Naive thymus-derived CD4-positive, alpha-beta T cell (primary cell): ENCODE measurements at regions of chr12 and their contacts with region 1.

Region 1: DNA sequence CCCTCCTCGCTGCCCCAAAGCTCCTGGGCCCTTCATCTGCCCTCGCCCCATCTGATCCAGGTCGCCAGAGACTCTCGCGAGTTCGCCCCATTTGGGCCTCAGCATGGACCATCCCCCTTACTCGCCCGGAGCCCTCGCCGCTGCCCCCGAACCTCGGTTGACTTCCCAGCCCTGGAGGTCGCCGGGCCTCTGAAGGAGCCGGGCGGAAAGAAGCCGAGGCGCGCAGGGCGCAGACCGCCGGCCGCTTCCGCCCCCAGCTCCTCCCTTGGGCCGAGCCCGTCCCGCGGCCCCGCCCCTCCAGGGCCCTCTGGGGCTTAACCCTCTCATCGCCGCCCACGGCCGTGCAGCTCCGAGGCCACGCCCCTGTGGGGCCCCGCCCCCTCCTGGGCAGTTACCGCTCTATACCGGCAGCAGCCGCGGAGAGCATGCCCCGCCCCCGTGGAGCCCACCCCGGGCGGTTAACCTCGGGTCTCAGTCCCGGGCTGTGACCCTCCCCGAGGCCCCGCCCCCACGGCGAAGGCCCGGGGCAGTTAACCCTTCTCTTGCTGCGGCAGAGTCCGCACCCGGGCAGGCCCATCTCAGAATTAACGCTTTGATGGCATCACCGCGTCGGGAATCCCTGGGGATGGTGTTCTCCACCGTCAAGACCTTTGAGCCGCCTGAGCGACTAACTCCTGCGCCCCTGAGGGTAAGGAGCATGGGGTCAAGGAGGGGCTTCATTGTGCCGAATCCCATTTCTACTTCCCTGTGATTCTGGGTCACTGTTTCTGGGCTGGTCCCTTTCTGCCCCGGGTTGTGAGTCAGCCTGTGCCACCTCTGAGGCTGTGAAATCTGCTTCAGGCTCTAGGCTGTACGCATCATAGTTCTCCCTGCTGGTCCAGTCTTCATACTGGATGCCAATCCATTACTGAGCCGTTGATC is at the start of gene SPSB2:
- DNase-seq: peak; percentile 96 to 100 (median 98)
- ATAC-seq: peak; percentile 97
- H3K4me3 ChIP-seq: peak within 1 kb of the TSS; percentile 98
- H3K4me3 Mint-ChIP-seq: peak within 1 kb of the TSS; percentile 87 to 95 (median 91)
- H3K27ac ChIP-seq: peak within 1 kb of the TSS; percentile 77
- H3K27ac Mint-ChIP-seq: peak within 1 kb of the TSS; percentile 79 to 94 (median 88)
- H3K4me1 ChIP-seq: peaks cover 32 to 34% of the 10 kb centered on the region in 2 donors
- H3K4me1 Mint-ChIP-seq: peaks cover 34 to 58% (median 47%) of the 10 kb centered on the region in 7 donors
- H3K27me3 ChIP-seq: no peaks in the 10 kb centered on the region
- H3K27me3 Mint-ChIP-seq: no peaks in the 10 kb centered on the region
- total RNA-seq, gene SPSB2: 5.1 to 20.2 (median 11.2) TPM

Region 2: GRCh38 chr12:6493497-6494257 is 379.7 kb before region 1 on chr12 and contains the start of gene NCAPD2:
- CTCF ChIA-PET with region 1: no interaction called
- POLR2A ChIA-PET with region 1: no interaction called
- intact Hi-C with region 1: loop called in 1 of 2 experiments (anchors 5 kb)
- DNase-seq: peak; percentile 82 to 97 (median 96)
- ATAC-seq: peak; percentile 91
- H3K4me3 ChIP-seq: peak within 1 kb of the TSS; percentile 98
- H3K4me3 Mint-ChIP-seq: peak within 1 kb of the TSS; percentile 86 to 98 (median 96)
- H3K27ac ChIP-seq: peak within 1 kb of the TSS; percentile 83
- H3K27ac Mint-ChIP-seq: peak within 1 kb of the TSS; percentile 87 to 97 (median 96)
- H3K4me1 ChIP-seq: peaks cover 22 to 24% of the 10 kb centered on the region in 2 donors
- H3K4me1 Mint-ChIP-seq: peaks cover 18 to 44% (median 37%) of the 10 kb centered on the region in 7 donors
- H3K27me3 ChIP-seq: no peaks in the 10 kb centered on the region
- H3K27me3 Mint-ChIP-seq: no peaks in the 10 kb centered on the region
- total RNA-seq, gene NCAPD2: 30.3 to 121 (median 38.4) TPM

Region 3: GRCh38 chr12:6723607-6724396 is 149.6 kb before region 1 on chr12 and contains the start of gene COPS7A:
- CTCF ChIA-PET with region 1: no interaction called
- POLR2A ChIA-PET with region 1: no interaction called
- intact Hi-C with region 1: loop called in 1 of 2 experiments (anchors 1 kb)
- DNase-seq: peak; percentile 77 to 94 (median 90)
- ATAC-seq: peak; percentile 93
- H3K4me3 ChIP-seq: peak within 1 kb of the TSS; percentile 63
- H3K4me3 Mint-ChIP-seq: peak within 1 kb of the TSS; percentile 80 to 97 (median 92)
- H3K27ac ChIP-seq: peak within 1 kb of the TSS; percentile 75
- H3K27ac Mint-ChIP-seq: peak within 1 kb of the TSS; percentile 90 to 98 (median 96)
- H3K4me1 ChIP-seq: peaks cover 10 to 11% of the 10 kb centered on the region in 2 donors
- H3K4me1 Mint-ChIP-seq: peaks cover 24 to 34% (median 27%) of the 10 kb centered on the region in 7 donors
- H3K27me3 ChIP-seq: no peaks in the 10 kb centered on the region
- H3K27me3 Mint-ChIP-seq: no peaks in the 10 kb centered on the region
- total RNA-seq, gene COPS7A: 21.9 to 38.7 (median 30.1) TPM

Region 4: DNA sequence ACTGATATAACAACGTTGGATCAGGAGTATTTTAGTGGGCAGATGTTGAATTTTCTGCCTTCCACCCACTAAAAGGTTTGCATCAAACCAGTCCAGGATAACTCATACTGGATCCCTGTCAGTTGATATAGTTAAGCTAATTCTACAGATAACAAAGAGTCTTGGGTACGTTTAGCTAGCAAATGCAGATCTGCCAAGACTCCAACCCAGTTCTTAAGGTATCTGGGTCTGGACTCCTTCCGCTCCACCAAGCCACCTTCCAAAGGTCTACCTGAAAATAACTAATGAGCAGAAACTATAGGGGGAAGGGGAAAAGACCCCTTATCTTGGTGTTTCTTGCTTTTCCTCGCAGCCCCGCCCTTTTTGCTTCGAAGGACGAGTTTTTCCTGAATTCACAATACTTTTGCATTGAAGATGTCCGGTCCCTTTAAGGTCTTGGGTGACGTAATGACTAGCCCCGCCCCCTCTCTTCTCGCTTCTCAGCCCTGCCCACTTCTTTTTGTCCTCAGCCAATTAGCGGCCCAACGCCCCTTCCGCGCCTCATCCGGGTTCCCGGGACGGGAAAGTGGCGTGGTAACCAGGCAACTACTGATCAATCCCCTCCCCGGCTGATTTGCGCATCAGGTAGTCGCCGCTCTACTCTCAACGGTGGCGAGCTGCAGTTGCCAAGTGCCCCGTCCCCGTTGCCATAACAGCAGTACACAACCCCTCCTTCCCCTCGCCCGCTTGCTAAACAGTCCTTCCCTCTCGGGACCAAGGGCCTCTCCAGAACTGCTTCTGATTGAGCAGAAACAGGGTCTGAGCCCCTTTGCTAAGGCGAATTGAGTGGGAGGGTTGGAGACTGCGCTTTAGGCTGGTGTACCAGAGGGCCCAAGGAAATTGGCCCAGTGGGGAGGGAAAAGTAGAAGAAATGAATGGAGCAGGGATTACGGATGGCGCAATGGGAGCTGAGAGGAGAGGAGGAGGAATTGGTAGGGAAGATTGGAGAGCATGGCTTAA is 31.2 kb after region 1 on chr12 and contains the start of gene LRRC23:
- CTCF ChIA-PET with region 1: interaction called, 10 read pairs
- POLR2A ChIA-PET with region 1: interaction called, 17 read pairs
- intact Hi-C with region 1: loop called (anchors 1 kb)
- DNase-seq: peak; percentile 89 to 98 (median 95)
- ATAC-seq: peak; percentile 98
- H3K4me3 ChIP-seq: peak within 1 kb of the TSS; percentile 75
- H3K4me3 Mint-ChIP-seq: peak within 1 kb of the TSS in 1 of 10 donors; percentile 8
- H3K27ac ChIP-seq: peak within 1 kb of the TSS; percentile 93
- H3K27ac Mint-ChIP-seq: peak within 1 kb of the TSS in 1 of 9 donors; percentile 78
- H3K4me1 ChIP-seq: peaks cover 14 to 17% of the 10 kb centered on the region in 2 donors
- H3K4me1 Mint-ChIP-seq: peaks cover 0 to 10% (median 3%) of the 10 kb centered on the region in 7 donors
- H3K27me3 ChIP-seq: no peaks in the 10 kb centered on the region
- H3K27me3 Mint-ChIP-seq: no peaks in the 10 kb centered on the region
- total RNA-seq, gene LRRC23: 6.6 to 12.1 (median 7.3) TPM

Region 5: DNA sequence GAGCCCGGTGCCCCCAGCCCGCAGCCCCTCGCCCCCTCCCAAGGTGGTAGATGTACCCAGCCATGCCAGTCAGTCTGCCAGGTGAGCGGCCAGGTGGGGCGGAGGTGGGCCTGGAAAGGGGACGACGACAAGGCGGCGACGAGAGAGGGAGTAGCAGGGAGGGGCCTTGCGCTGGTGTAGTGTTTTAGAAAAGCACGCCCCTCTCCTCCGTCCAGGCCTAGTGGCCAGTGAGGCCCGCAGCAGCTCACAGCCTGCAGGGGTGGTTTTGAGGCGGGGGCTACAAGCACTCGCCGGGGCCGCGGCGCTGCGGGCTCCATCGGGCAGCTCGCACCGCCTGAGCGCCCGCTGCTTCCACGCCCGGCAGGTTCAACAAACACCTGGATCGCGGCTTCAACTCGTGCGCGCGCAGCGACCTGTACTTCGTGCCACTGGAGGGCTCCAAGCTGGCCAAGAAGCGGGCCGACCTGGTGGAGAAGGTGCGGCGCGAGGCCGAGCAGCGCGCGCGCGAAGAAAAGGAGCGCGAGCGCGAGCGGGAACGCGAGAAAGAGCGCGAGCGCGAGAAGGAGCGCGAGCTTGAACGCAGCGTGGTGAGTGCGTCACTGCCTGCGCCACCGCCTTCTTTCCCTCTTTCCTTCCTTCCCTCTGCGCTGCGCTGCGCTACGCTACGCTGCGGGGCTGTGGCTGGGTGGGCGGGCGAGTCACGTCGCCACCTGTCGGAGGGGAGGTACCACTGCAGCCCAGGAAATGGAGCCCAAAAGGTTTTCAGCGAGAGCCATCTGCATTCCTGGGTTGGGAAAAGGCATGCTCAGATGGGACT is 64.3 kb after region 1 on chr12:
- CTCF ChIA-PET with region 1: interaction called, 21 read pairs
- POLR2A ChIA-PET with region 1: interaction called, 52 read pairs
- intact Hi-C with region 1: loop called in 1 of 2 experiments (anchors 1 kb)
- DNase-seq: peak; percentile 81 to 96 (median 93)
- ATAC-seq: peak; percentile 97
- H3K4me3 ChIP-seq: peak overlapping the region; percentile 90
- H3K4me3 Mint-ChIP-seq: peak overlapping the region; percentile 75 to 88 (median 84)
- H3K27ac ChIP-seq: peak overlapping the region; percentile 92
- H3K27ac Mint-ChIP-seq: peak overlapping the region; percentile 91 to 99 (median 96)
- H3K4me1 ChIP-seq: peaks cover 5 to 29% of the 10 kb centered on the region in 2 donors
- H3K4me1 Mint-ChIP-seq: peaks cover 41 to 67% (median 51%) of the 10 kb centered on the region in 7 donors
- H3K27me3 ChIP-seq: no peaks in the 10 kb centered on the region
- H3K27me3 Mint-ChIP-seq: no peaks in the 10 kb centered on the region

Region 6: GRCh38 chr12:6965026-6965661 is 91.8 kb after region 1 on chr12:
- CTCF ChIA-PET with region 1: interaction called, 14 read pairs
- POLR2A ChIA-PET with region 1: interaction called, 11 read pairs
- intact Hi-C with region 1: loop called (anchors 1 kb)
- DNase-seq: peak; percentile 77 to 89 (median 85)
- ATAC-seq: peak; percentile 69
- H3K4me3 ChIP-seq: no peak overlapping the region
- H3K4me3 Mint-ChIP-seq: peak overlapping the region in 3 of 10 donors; percentile 9 to 23 (median 17)
- H3K27ac ChIP-seq: peak overlapping the region; percentile 68
- H3K27ac Mint-ChIP-seq: peak overlapping the region; percentile 75 to 95 (median 87)
- H3K4me1 ChIP-seq: peaks cover 45 to 60% of the 10 kb centered on the region in 2 donors
- H3K4me1 Mint-ChIP-seq: peaks cover 33 to 59% (median 56%) of the 10 kb centered on the region in 7 donors
- H3K27me3 ChIP-seq: no peaks in the 10 kb centered on the region
- H3K27me3 Mint-ChIP-seq: no peaks in the 10 kb centered on the region

Region 7: GRCh38 chr12:7108796-7109571 is 235.6 kb after region 1 on chr12 and contains the start of gene C1RL:
- CTCF ChIA-PET with region 1: interaction called, 45 read pairs
- POLR2A ChIA-PET with region 1: interaction called, 5 read pairs
- intact Hi-C with region 1: loop called (anchors 1 kb)
- DNase-seq: peak; percentile 50 to 88 (median 65)
- ATAC-seq: peak; percentile 69
- H3K4me3 ChIP-seq: peak within 1 kb of the TSS; percentile 95
- H3K4me3 Mint-ChIP-seq: peak within 1 kb of the TSS; percentile 90 to 98 (median 94)
- H3K27ac ChIP-seq: peak within 1 kb of the TSS; percentile 79
- H3K27ac Mint-ChIP-seq: peak within 1 kb of the TSS; percentile 84 to 95 (median 93)
- H3K4me1 ChIP-seq: peaks cover 6% of the 10 kb centered on the region in 2 donors
- H3K4me1 Mint-ChIP-seq: peaks cover 29 to 64% (median 43%) of the 10 kb centered on the region in 7 donors
- H3K27me3 ChIP-seq: no peaks in the 10 kb centered on the region
- H3K27me3 Mint-ChIP-seq: no peaks in the 10 kb centered on the region
- total RNA-seq, gene C1RL: 18.5 to 38.6 (median 24.4) TPM

Region 8: DNA sequence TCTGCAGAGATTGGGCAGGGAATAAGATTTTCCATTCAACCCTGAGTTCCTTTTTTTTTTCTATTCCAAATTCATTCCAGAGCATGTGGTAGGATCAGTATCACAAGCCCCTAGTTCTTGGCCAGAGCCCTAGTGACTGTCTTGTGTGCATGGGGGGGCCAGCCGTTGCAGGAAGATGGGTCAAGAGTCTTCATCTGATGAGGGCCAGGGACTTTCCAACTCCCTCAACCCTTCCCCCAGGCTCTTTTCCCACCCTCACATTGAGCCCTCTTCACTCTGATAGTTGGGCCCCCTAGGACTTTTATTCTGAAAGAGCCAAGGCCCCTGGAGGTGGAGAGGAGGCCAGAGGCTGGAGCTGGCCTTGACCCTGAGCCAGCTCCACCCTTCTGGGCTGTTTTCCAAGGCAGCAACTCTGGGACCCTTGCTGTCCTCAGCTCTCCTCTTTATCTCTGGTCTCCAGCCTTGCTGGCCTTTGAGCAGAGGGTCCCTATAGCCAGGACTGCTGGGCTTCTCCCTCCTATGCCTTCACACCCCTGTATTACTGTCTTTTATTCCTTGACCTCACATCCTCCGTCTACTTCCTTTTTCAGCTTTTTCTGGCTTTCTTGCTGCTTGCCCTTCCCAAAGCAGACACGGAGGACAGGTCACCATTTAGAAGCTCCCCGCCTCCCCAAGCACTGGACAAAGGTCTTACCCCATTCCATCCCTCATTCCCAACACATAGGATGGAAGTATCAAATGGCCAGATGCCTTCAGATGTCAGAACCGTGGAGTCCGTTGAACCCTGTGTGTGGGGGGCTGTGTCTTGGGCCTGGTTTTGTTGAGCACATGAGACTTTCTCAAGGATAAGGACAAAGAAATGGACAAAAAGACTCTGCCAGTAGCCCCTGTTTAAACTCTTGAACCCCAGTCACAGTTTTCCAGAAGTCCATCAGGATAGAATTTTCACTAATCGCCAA is 249.7 kb after region 1 on chr12:
- CTCF ChIA-PET with region 1: no interaction called
- POLR2A ChIA-PET with region 1: no interaction called
- intact Hi-C with region 1: no loop called
- DNase-seq: no peak
- ATAC-seq: no peak
- H3K4me3 ChIP-seq: no peak overlapping the region
- H3K4me3 Mint-ChIP-seq: no peak overlapping the region
- H3K27ac ChIP-seq: no peak overlapping the region
- H3K27ac Mint-ChIP-seq: no peak overlapping the region
- H3K4me1 ChIP-seq: no peaks in the 10 kb centered on the region
- H3K4me1 Mint-ChIP-seq: peaks cover 0 to 6% (median 4%) of the 10 kb centered on the region in 7 donors
- H3K27me3 ChIP-seq: no peaks in the 10 kb centered on the region
- H3K27me3 Mint-ChIP-seq: no peaks in the 10 kb centered on the region